Heart left ventricle (tissue), 16 donors: ENCODE measurements at regions of chr15 and their contacts with region 1.

Region 1: DNA sequence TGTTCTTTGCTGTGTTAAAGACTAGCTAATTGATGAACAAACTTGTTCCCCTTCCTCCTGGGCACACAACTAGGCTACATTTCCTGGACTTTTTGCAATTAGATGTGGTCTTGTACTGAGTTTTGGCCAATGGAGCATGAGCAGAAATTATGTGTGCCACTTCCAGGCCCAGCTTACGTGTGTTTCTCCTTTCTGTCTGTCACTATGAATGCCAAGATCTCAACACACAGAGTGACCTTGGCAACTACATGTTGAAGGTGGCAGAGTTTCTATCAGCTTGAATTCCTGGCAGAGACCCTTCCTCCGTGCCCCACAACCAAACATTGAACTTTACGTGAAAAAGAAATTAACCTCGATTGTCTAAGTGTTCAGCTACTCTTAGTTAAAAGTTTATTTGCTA is 81.7 kb upstream of the PIAS1 start:
- DNase-seq: no peak
- ATAC-seq: peak in 3 of 4 donors; percentile 49 to 68 (median 49)
- H3K4me3 ChIP-seq: no peak overlapping the region
- H3K27ac ChIP-seq: peak overlapping the region in 7 of 12 donors; percentile 9 to 57 (median 43)
- H3K4me1 ChIP-seq: peaks cover 0 to 15% (median 5%) of the 10 kb centered on the region in 12 donors
- H3K27me3 ChIP-seq: no peaks in the 10 kb centered on the region
- CTCF ChIP-seq: no peak
- POLR2A ChIP-seq: no peak

Region 2: DNA sequence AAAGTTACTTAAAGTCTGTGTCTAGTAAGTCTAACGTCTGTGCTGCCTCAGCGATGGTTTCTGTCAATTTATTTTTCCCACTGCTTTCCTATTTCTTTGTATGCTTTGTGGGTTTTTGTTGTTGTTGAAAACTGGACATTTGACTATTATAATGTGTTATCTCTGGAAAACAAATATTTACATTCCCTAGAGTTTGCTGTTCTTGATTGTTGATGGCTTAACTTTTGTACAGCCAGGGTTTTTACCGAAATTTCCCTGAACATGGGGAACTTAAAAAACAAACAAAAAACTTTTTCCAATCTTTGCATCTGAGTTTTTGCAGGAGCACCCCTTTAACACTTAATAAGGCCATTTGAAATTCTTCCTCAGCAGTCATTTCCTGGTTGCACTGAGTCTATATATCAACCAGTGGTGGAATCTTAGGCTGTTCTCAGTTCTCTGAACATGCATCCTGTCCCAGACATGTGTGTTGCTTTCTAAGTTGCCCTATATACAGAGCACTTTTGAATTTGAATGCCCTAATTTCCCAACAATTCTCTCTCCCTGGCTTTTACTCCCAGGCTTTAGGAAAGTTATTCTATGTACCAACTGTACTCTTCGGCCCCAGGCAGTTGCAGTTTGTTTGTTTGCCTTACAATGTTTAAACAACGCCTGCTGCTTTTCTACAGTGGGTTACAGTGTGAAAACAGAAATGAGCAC is 69.9 kb after region 1 on chr15:
- intact Hi-C with region 1: loop called in 1 of 10 experiments (anchors 5 kb)
- DNase-seq: no peak
- ATAC-seq: no peak
- H3K4me3 ChIP-seq: no peak overlapping the region
- H3K27ac ChIP-seq: peak overlapping the region in 1 of 12 donors; percentile 0
- H3K4me1 ChIP-seq: no peaks in the 10 kb centered on the region
- H3K27me3 ChIP-seq: no peaks in the 10 kb centered on the region
- CTCF ChIP-seq: no peak
- POLR2A ChIP-seq: no peak